ENCODE measurements at regions of chr2 and their contacts with region 1.

Region 1: DNA sequence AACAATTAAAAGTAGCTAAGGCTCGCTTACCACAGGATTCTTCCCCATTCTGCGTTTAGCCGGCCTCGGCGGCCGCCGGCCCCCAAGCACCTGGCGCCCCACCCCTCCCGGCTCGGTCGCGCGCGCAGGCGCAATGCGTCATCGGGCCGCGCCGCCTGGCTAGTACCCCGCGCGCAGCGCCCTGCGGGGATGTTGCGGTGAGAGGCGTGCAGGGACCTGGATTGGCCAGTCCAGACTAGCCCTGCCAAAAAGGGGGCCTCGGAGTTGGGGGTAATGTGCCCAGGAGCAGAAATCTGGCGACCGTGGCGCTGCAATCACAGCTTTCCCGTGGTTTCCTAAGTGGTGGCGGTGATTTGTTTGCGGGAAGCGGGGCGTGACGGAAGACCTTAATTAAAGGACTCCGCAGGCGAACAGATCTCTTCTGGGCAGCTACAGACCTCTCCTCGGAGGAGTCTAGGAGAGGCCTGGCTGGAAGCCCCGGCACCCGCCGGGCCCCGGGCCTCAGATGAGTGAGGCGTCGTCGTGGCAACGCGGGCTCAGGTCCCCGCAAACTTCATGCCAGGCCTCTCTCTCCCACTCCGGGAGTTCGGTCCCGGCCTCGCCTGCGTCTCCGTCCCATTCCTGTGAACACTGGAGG is 606 bp downstream of the TMEM237 start:
- DNase-seq: peak; percentile 85
- ATAC-seq: peak; percentile 80
- H3K4me3 ChIP-seq: peak overlapping the region; percentile 82
- H3K27ac ChIP-seq: peak overlapping the region; percentile 51
- H3K4me1 ChIP-seq: peaks cover 6% of the 10 kb centered on the region
- H3K27me3 ChIP-seq: no peaks in the 10 kb centered on the region
- CTCF ChIP-seq: no peak

Region 2: GRCh38 chr2:201451292-201452057 is 191.2 kb before region 1 on chr2 and contains the starts of genes STRADB and TRAK2:
- CTCF ChIA-PET with region 1: interaction called, 9 read pairs
- POLR2A ChIA-PET with region 1: no interaction called
- intact Hi-C with region 1: loop called (anchors 1 kb)
- DNase-seq: peak; percentile 95
- ATAC-seq: peak; percentile 88
- H3K4me3 ChIP-seq: peak within 1 kb of the TSS; percentile 88
- H3K27ac ChIP-seq: peak within 1 kb of the TSS; percentile 21
- H3K4me1 ChIP-seq: peaks cover 23% of the 10 kb centered on the region
- H3K27me3 ChIP-seq: no peaks in the 10 kb centered on the region
- CTCF ChIP-seq: 0 out of 2 replicates have a peak, but pooled peaks have one; percentile 16
- total RNA-seq, gene STRADB: 27.8 and 28.9 TPM in 2 replicates
- total RNA-seq, gene TRAK2: 9.4 and 10.1 TPM in 2 replicates

Region 3: DNA sequence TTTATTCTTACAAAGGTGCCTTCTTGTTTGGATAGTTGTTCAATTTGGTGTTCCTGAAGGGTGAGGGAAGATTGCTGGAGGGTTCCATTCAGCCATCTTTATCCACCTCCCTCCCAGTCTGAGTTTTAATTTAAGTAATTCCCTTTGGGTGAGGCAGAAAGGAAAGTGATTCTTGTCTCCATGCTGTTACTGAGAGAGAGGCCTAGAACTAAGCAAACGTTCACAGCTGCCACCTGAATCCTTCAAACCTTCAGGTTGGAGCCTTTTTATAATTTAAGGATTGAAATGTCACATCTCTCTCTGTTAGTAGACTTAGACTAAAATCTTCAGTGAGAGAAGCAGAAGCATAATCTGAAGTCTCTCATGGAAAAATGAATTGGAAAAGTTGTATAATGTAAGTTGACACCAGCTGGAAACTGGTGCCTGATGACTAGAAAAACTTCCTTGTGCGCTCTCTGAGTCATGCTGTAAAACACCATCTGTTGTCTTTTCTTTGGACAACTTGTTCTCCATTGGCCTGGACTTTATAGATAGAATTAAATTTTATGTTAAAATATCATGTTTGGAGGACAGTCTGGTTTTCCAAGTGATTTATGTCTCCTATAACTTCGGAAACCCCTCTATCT is 176.5 kb before region 1 on chr2:
- CTCF ChIA-PET with region 1: no interaction called
- POLR2A ChIA-PET with region 1: no interaction called
- intact Hi-C with region 1: loop called (anchors 1 kb)
- DNase-seq: peak; percentile 80
- ATAC-seq: peak; percentile 85
- H3K4me3 ChIP-seq: peak overlapping the region; percentile 45
- H3K27ac ChIP-seq: peak overlapping the region; percentile 85
- H3K4me1 ChIP-seq: peaks cover 46% of the 10 kb centered on the region
- H3K27me3 ChIP-seq: no peaks in the 10 kb centered on the region
- CTCF ChIP-seq: no peak

Region 4: DNA sequence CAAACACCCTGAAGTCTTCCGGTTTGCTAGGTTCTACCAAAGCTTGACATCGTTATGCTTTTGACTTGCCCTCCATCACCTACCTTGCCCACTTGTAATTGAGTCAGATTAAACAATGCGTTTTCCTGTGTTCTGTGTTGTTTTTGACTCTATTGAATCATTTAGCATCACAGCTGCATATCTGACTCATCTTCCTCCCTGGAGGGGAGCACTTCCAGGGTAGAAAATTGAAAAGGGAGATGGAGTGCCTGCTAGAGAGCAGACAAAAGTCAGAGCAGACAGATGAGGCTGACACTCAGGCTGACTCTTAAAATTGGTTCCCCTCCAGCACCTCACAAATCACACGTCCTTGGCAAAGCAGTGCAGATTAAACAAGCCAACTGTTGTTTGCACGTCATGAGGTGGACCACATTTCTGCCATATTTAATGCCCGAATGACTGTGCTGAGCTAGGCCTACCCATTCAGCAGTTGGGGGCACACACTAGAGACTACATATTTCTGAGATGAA is 53.5 kb after region 1 on chr2:
- CTCF ChIA-PET with region 1: no interaction called
- POLR2A ChIA-PET with region 1: interaction called, 13 read pairs
- intact Hi-C with region 1: loop called (anchors 5 kb)
- DNase-seq: peak; percentile 83
- ATAC-seq: peak; percentile 44
- H3K4me3 ChIP-seq: no peak overlapping the region
- H3K27ac ChIP-seq: peak overlapping the region; percentile 79
- H3K4me1 ChIP-seq: peaks cover 50% of the 10 kb centered on the region
- H3K27me3 ChIP-seq: no peaks in the 10 kb centered on the region
- CTCF ChIP-seq: no peak

Region 5: GRCh38 chr2:201707753-201708152 is 65.1 kb after region 1 on chr2:
- CTCF ChIA-PET with region 1: no interaction called
- POLR2A ChIA-PET with region 1: no interaction called
- intact Hi-C with region 1: loop called (anchors 2 kb)
- DNase-seq: peak; percentile 67
- ATAC-seq: peak; percentile 88
- H3K4me3 ChIP-seq: no peak overlapping the region
- H3K27ac ChIP-seq: no peak overlapping the region
- H3K4me1 ChIP-seq: peaks cover 11% of the 10 kb centered on the region; the same call in 1 of the 2 replicates
- H3K27me3 ChIP-seq: no peaks in the 10 kb centered on the region
- CTCF ChIP-seq: peak; percentile 67

Region 6: GRCh38 chr2:201754717-201755415 is 112.2 kb after region 1 on chr2:
- CTCF ChIA-PET with region 1: interaction called, 4 read pairs
- POLR2A ChIA-PET with region 1: interaction called, 37 read pairs
- intact Hi-C with region 1: no loop called
- DNase-seq: peak; percentile 72
- ATAC-seq: peak; percentile 96
- H3K4me3 ChIP-seq: no peak overlapping the region
- H3K27ac ChIP-seq: no peak overlapping the region
- H3K4me1 ChIP-seq: peaks cover 10% of the 10 kb centered on the region
- H3K27me3 ChIP-seq: no peaks in the 10 kb centered on the region
- CTCF ChIP-seq: no peak

Measured in PC-3 (cell line).